ENCODE measurements at regions of chr5 and their contacts with region 1.

Region 1: GRCh38 chr5:113336975-113337374 is 97.8 kb downstream of the TSSK1B start:
- DNase-seq: peak; percentile 37
- ATAC-seq: peak; percentile 78
- H3K4me3 Mint-ChIP-seq: no peak overlapping the region
- H3K27ac Mint-ChIP-seq: no peak overlapping the region
- H3K4me1 Mint-ChIP-seq: peaks cover 24% of the 10 kb centered on the region
- H3K27me3 Mint-ChIP-seq: peaks cover 11% of the 10 kb centered on the region

Region 2: GRCh38 chr5:113378959-113379541 is 42.1 kb after region 1 on chr5:
- POLR2A ChIA-PET with region 1: no interaction called
- DNase-seq: peak; percentile 32
- ATAC-seq: no peak
- H3K4me3 Mint-ChIP-seq: peak overlapping the region; percentile 63
- H3K27ac Mint-ChIP-seq: peak overlapping the region; percentile 54
- H3K4me1 Mint-ChIP-seq: peaks cover 48% of the 10 kb centered on the region
- H3K27me3 Mint-ChIP-seq: peaks cover 23% of the 10 kb centered on the region

Region 3: DNA sequence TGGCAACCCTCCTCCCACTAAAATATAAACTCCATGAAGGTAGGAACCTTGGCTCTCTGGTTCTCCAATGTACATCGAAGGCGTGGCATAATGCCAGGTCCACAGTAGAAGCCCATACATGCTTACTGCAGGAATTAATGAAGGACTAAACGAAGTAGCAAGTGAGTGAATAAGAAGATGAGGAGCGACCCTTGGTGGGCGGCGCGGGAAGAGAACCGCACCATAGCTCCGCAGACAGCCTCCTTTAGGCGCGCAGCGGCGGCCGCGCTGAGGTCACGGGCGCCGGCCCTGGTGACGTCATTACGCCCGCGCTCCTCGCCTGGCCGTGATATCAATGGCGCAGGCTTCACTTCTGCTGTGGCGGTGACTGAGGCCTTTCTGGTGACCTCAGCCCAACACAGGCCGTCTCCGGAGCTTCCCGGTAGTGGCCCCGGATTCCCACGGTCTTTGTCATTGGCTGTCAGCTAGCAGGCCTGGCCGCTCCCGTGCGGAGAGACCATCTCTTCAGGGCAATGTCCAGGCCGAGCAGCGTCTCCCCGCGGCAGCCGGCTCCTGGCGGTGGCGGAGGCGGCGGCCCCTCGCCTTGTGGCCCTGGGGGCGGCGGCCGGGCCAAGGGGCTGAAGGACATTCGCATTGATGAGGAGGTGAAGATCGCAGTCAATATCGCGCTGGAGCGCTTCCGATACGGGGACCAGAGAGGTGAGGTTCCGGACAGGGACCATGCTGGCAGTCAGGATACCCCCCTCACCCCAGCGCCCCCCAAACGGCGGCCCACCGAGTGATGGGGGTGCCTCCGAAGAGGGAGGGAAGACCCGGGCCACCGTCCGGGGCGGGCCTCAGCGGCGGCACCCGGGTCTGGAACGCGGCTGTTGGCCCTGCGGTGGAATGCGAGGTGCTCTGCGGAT is 176.7 kb after region 1 on chr5 and contains the start of gene YTHDC2:
- POLR2A ChIA-PET with region 1: interaction called, 12 read pairs
- DNase-seq: peak; percentile 89
- ATAC-seq: peak; percentile 98
- H3K4me3 Mint-ChIP-seq: peak within 1 kb of the TSS; percentile 93
- H3K27ac Mint-ChIP-seq: peak within 1 kb of the TSS; percentile 86
- H3K4me1 Mint-ChIP-seq: peaks cover 26% of the 10 kb centered on the region
- H3K27me3 Mint-ChIP-seq: peaks cover 22% of the 10 kb centered on the region
- total RNA-seq, gene YTHDC2: 37.7 to 37.9 TPM

Measured in activated naive CD8-positive, alpha-beta T cell treated with anti-CD3 and anti-CD28 coated beads, Interleukin-2, amount 10 ng/mL, durations not matched to agents 7 days and 5 days (primary cell).